OCI-LY7 (cell line): ENCODE measurements at regions of chr10 and their contacts with region 1.

Region 1: DNA sequence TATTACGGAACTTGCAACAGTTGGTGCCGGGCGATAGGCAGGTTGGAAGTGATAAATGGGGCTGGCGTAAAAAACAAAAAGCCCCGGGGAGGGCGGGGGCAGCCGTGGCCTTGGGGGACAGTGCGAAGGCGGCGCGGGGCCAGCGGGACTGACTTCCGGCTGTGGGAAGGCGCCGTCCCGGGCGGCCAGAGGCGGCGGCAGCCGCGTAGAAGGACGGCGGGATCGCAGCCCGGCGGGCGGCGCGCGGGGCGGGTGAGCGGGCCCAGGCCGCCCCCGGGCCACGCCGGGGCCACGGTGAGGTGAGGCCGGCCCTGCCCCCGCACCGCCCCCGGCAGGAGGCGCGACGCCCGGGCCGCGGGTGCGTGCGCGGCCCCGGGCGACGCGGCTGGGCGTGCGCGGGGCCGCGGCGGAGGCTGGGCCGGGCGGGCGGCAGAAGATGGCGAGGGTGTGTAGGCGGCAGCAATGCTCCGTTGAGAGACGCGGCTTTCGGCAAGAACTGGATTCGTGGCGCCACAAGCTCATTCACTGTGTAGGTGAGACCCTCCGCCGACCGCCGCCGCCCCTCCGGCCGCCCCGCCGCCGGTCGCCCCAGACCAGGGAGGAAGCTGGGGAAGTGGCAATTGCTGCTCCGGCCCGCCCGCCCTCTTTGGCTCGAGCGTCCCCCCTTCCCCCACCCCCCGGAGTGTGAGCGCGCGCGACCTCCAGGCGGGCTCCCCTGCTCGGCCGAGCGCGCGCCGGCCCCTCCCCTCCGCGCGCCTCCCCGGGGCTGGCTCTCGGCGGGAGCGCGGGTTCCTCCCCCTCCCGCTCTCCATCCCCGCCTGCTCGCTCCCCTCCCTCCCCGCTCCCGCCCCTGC is at the start of gene LCOR:
- DNase-seq: peak; percentile 94
- H3K4me3 ChIP-seq: peak within 1 kb of the TSS; percentile 95
- H3K27ac ChIP-seq: peak within 1 kb of the TSS; percentile 89
- H3K4me1 ChIP-seq: peaks cover 54% of the 10 kb centered on the region
- CTCF ChIP-seq: no peak
- total RNA-seq, gene LCOR: 17.1 and 32.1 TPM in 2 replicates

Region 2: DNA sequence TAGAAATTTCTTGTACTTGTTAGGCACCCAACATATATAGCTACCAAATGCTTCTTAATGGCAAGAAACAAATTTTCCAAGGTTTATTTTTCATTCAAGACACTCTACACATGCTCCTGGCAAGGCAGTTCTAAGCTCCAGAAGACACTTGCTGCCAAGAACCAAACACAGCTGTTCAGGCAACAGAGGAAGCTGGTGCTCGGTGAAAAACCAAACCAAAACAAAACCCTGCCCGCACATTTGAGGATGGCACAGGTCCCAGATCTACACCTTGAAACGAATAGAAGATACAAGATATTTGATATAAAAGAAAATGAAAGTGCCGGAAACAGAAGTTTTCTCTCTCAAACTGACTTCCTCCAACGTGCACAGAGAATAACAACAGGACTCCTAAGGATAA is 532.7 kb before region 1 on chr10:
- CTCF ChIA-PET with region 1: no interaction called
- POLR2A ChIA-PET with region 1: no interaction called
- intact Hi-C with region 1: no loop called
- DNase-seq: peak; percentile 62
- H3K4me3 ChIP-seq: peak overlapping the region; percentile 45
- H3K27ac ChIP-seq: peak overlapping the region; percentile 68
- H3K4me1 ChIP-seq: peaks cover 70% of the 10 kb centered on the region
- CTCF ChIP-seq: no peak

Region 3: GRCh38 chr10:96586419-96587263 is 245.5 kb before region 1 on chr10 and contains the start of gene TM9SF3:
- CTCF ChIA-PET with region 1: no interaction called
- POLR2A ChIA-PET with region 1: no interaction called
- intact Hi-C with region 1: loop called (anchors 5 kb)
- DNase-seq: peak; percentile 91
- H3K4me3 ChIP-seq: peak within 1 kb of the TSS; percentile 99
- H3K27ac ChIP-seq: peak within 1 kb of the TSS; percentile 88
- H3K4me1 ChIP-seq: peaks cover 42% of the 10 kb centered on the region
- CTCF ChIP-seq: no peak
- total RNA-seq, gene TM9SF3: 20.8 and 23.0 TPM in 2 replicates

Region 4: GRCh38 chr10:96700374-96701099 is 131.6 kb before region 1 on chr10:
- CTCF ChIA-PET with region 1: no interaction called
- POLR2A ChIA-PET with region 1: no interaction called
- intact Hi-C with region 1: loop called (anchors 5 kb)
- DNase-seq: peak; percentile 96
- H3K4me3 ChIP-seq: peak overlapping the region; percentile 75
- H3K27ac ChIP-seq: peak overlapping the region; percentile 96
- H3K4me1 ChIP-seq: peaks cover 81% of the 10 kb centered on the region
- CTCF ChIP-seq: no peak

Region 5: GRCh38 chr10:96765406-96766240 is 66.5 kb before region 1 on chr10:
- CTCF ChIA-PET with region 1: interaction called, 3 read pairs
- POLR2A ChIA-PET with region 1: interaction called, 13 read pairs
- intact Hi-C with region 1: loop called (anchors 1 kb)
- DNase-seq: peak; percentile 90
- H3K4me3 ChIP-seq: peak overlapping the region; percentile 1
- H3K27ac ChIP-seq: peak overlapping the region; percentile 75
- H3K4me1 ChIP-seq: peaks cover 38% of the 10 kb centered on the region
- CTCF ChIP-seq: peak; percentile 100

Region 6: DNA sequence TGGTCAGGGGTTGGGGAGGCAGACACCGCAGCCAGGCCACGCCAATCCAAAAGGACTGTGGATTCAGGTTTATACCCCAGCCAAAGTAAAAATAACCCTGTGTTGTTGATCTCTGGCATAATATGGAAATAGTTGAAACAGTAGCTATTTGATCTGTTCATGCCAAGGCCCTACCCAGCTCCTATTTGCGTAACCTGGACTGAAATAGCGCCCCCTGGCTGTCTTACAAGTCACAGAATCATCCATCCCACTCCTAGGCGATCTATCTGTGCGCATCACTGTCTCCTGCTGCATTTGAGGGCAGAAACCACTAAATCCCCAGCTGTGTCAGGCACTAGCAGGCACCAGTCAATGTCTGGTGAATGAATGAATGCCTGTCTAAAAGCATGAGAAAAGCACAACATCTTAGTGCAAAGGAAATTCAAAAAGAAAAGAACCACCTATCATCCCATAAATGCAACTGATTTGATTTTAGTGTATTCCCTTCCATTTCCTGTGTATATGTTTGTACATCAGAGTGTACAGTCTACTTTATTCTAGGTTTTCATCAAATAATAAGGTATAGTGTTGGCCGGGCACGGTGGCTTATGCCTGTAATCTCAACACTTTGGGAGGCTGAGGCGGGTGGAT is 193.6 kb after region 1 on chr10:
- CTCF ChIA-PET with region 1: no interaction called
- POLR2A ChIA-PET with region 1: no interaction called
- intact Hi-C with region 1: loop called (anchors 5 kb)
- DNase-seq: peak; percentile 77
- H3K4me3 ChIP-seq: no peak overlapping the region
- H3K27ac ChIP-seq: no peak overlapping the region
- H3K4me1 ChIP-seq: peaks cover 43% of the 10 kb centered on the region
- CTCF ChIP-seq: peak; percentile 94

Region 7: GRCh38 chr10:97058521-97058920 is 226.4 kb after region 1 on chr10:
- CTCF ChIA-PET with region 1: no interaction called
- POLR2A ChIA-PET with region 1: no interaction called
- intact Hi-C with region 1: no loop called
- DNase-seq: no peak
- H3K4me3 ChIP-seq: no peak overlapping the region
- H3K27ac ChIP-seq: no peak overlapping the region
- H3K4me1 ChIP-seq: no peaks in the 10 kb centered on the region
- CTCF ChIP-seq: no peak

Region 8: DNA sequence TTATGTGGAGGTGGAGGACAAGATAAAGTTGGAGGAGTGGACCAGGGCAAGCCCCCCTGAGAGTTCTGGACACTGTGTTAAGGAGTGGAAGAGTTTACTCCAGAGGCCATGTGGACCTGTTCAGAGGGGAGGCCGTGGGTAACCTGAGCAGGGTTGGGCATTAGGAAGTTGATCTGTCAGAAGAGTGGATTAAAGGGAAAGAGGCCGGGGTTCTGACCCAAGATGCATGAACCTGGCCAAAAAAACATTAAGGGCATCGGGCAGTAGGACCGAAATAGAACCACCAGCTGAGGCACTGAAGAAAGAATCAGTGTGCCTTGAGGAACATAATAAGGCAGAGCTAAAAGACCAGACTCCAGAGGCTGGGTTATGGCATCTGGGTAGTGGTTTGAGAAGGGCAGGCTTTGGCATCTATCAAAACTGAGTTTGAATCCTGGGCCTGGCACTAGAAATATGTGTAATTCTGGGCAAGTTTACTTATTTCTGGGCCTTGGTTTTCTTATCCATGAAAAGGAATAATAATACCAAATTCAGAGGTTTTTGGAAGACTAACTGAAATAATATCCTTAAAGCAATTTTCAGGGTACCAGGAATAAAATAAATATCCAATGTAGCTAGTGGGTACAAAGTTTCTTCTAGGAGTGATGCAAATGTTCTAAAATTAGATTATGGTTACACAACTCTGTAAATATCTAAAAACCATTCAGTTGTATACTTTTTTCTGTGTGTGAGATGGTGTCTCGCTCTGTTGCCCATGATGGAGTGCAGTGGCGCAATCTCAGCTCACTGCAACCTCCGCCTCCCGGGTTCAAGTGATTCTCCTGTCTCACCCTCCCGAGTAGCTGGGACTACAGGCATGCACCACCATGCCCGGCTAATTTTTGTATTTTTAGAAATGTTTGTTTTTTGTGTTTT is 476.0 kb after region 1 on chr10:
- CTCF ChIA-PET with region 1: no interaction called
- POLR2A ChIA-PET with region 1: no interaction called
- intact Hi-C with region 1: no loop called
- DNase-seq: no peak
- H3K4me3 ChIP-seq: no peak overlapping the region
- H3K27ac ChIP-seq: no peak overlapping the region
- H3K4me1 ChIP-seq: no peaks in the 10 kb centered on the region
- CTCF ChIP-seq: no peak